IMR-90 (cell line): ENCODE measurements at regions of chr22 and their contacts with region 1.

Region 1: GRCh38 chr22:50250555-50251476 is at the start of gene HDAC10:
- DNase-seq: peak; percentile 74
- ATAC-seq: peak; percentile 84
- H3K4me3 ChIP-seq: peak within 1 kb of the TSS; percentile 88
- H3K27ac ChIP-seq: peak within 1 kb of the TSS; percentile 28
- H3K4me1 ChIP-seq: peaks cover 12% of the 10 kb centered on the region
- H3K27me3 ChIP-seq: no peaks in the 10 kb centered on the region
- CTCF ChIP-seq: no peak
- POLR2A ChIP-seq: no peak
- RAD21 ChIP-seq: no peak
- total RNA-seq, gene HDAC10: 3.6 and 3.9 TPM in 2 replicates

Region 2: DNA sequence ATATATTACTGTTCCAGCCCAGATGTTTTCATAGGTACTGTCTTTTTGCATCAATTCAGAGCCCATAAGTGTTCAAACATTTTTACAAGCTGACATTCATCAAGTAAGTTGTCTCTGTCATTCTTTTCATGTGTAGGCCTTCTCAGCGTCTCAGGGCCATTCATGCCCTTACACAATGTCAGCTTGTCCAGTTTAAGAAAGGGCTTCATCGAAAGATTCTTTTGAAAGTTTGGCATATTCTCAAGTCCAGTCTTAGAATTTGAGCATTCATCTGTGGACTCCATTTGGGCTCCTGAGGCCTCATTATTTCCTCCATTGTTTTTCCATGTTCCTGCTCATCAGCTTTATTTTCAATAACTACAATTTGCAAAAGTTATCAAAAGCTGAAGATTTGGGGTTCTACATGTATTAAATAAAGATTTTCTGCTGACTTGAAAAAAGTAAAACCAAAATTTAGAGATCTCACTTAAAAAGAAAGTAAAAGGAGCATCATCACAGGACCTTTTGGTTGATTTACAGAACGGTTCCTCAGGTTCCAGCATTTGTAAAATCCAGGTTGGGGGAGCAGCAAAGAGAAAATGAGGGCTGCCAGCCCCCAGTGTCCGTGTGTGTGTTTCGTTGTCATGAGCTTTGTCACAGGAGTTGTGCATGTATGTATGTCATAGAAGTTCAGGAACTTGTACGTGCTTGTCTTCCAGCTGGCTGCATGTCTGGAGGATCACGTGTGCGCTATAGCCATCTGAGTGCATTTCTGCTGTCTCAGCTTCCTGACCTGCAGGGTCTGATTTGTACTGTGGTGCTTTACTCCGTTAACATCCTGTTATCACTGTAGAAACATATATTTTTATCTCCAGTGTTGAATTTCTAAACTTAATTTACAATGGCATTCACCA is 145.4 kb before region 1 on chr22:
- CTCF ChIA-PET with region 1: no interaction called
- POLR2A ChIA-PET with region 1: no interaction called
- dilution Hi-C with region 1: no loop called
- in situ Hi-C with region 1: no loop called
- intact Hi-C with region 1: no loop called
- DNase-seq: peak; percentile 64
- ATAC-seq: peak; percentile 88
- H3K4me3 ChIP-seq: no peak overlapping the region
- H3K27ac ChIP-seq: peak overlapping the region; percentile 22; the same call in 1 of the 2 replicates
- H3K4me1 ChIP-seq: no peaks in the 10 kb centered on the region; the same call in 1 of the 2 replicates
- H3K27me3 ChIP-seq: peaks cover 5% of the 10 kb centered on the region
- CTCF ChIP-seq: no peak
- POLR2A ChIP-seq: no peak
- RAD21 ChIP-seq: no peak

Region 3: GRCh38 chr22:50341977-50342650 is 91.3 kb after region 1 on chr22:
- CTCF ChIA-PET with region 1: interaction called, 7 read pairs
- POLR2A ChIA-PET with region 1: no interaction called
- dilution Hi-C with region 1: no loop called
- in situ Hi-C with region 1: no loop called
- intact Hi-C with region 1: loop called (anchors 1 kb)
- DNase-seq: peak; percentile 75
- ATAC-seq: peak; percentile 79
- H3K4me3 ChIP-seq: peak overlapping the region; percentile 57
- H3K27ac ChIP-seq: no peak overlapping the region; the same call in 1 of the 2 replicates
- H3K4me1 ChIP-seq: peaks cover 5% of the 10 kb centered on the region; the same call in 1 of the 2 replicates
- H3K27me3 ChIP-seq: no peaks in the 10 kb centered on the region
- CTCF ChIP-seq: peak; percentile 99
- POLR2A ChIP-seq: no peak
- RAD21 ChIP-seq: peak; percentile 93